ENCODE measurements at regions of chr15 and their contacts with region 1.

Region 1: GRCh38 chr15:30885814-30886213 is 17.9 kb upstream of the FAN1 start:
- DNase-seq: peak in 1 of 2 donors; percentile 15
- H3K4me3 ChIP-seq: no peak overlapping the region
- H3K27ac ChIP-seq: no peak overlapping the region
- H3K4me1 ChIP-seq: no peaks in the 10 kb centered on the region
- H3K27me3 ChIP-seq: no peaks in the 10 kb centered on the region
- CTCF ChIP-seq: no peak
- POLR2A ChIP-seq: no peak

Region 2: DNA sequence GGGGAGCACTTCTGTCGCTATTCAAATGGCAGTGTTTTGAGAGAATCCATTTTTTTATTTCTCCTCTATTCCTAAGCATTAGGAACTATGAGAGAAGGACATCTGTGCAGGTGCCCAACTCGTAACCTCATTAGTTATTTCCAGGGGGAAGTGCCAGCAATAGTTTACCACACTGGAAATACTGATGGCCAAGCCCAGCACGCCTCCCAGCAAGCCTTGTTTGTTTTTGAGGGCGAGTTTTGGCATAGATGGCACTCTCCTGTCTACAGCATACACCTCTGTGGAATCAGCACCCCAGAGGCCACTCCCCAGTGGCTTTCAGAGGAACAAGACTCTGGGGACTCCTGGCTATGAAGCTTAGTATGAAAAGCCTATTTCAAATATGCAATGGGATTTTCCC is 54.5 kb after region 1 on chr15:
- intact Hi-C with region 1: no loop called
- DNase-seq: peak; percentile 64 to 72
- H3K4me3 ChIP-seq: no peak overlapping the region
- H3K27ac ChIP-seq: peak overlapping the region in 1 of 3 donors; percentile 54
- H3K4me1 ChIP-seq: peaks cover 7 to 12% of the 10 kb centered on the region in 2 donors
- H3K27me3 ChIP-seq: no peaks in the 10 kb centered on the region
- CTCF ChIP-seq: peak in 3 of 6 experiments; percentile 13 to 42 (median 32)
- POLR2A ChIP-seq: no peak

Region 3: GRCh38 chr15:31128919-31129768 is 243.3 kb after region 1 on chr15:
- intact Hi-C with region 1: loop called (anchors 5 kb)
- DNase-seq: peak; percentile 74 to 80
- H3K4me3 ChIP-seq: no peak overlapping the region
- H3K27ac ChIP-seq: no peak overlapping the region
- H3K4me1 ChIP-seq: peaks cover 0 to 4% of the 10 kb centered on the region in 2 donors
- H3K27me3 ChIP-seq: no peaks in the 10 kb centered on the region
- CTCF ChIP-seq: peak; percentile 85 to 97 (median 88)
- POLR2A ChIP-seq: no peak